Dorsolateral prefrontal cortex (tissue), 120 donors: ENCODE measurements at regions of chr1 and their contacts with region 1.

Region 1: GRCh38 chr1:83998498-83999315 is at the start of gene TTLL7:
- DNase-seq: peak; percentile 83 to 95 (median 90)
- H3K4me3 ChIP-seq: peak within 1 kb of the TSS; percentile 40 to 98 (median 90)
- H3K27ac ChIP-seq: peak within 1 kb of the TSS; percentile 81 to 100 (median 98)
- H3K27me3 ChIP-seq: peaks cover 0 to 3% (median 0%) of the 10 kb centered on the region in 45 donors
- CTCF ChIP-seq: peak in 10 of 56 donors; percentile 2 to 33 (median 15)
- total RNA-seq, gene TTLL7: 130 to 401 (median 226) TPM

Region 2: GRCh38 chr1:83959824-83960498 is 38.7 kb before region 1 on chr1:
- intact Hi-C with region 1: loop called (anchors 2 kb)
- DNase-seq: no peak
- H3K4me3 ChIP-seq: peak overlapping the region in 7 of 59 donors; percentile 5 to 44 (median 20)
- H3K27ac ChIP-seq: peak overlapping the region; percentile 2 to 97 (median 89)
- H3K27me3 ChIP-seq: no peaks in the 10 kb centered on the region
- CTCF ChIP-seq: peak in 1 of 56 donors; percentile 7

Region 3: DNA sequence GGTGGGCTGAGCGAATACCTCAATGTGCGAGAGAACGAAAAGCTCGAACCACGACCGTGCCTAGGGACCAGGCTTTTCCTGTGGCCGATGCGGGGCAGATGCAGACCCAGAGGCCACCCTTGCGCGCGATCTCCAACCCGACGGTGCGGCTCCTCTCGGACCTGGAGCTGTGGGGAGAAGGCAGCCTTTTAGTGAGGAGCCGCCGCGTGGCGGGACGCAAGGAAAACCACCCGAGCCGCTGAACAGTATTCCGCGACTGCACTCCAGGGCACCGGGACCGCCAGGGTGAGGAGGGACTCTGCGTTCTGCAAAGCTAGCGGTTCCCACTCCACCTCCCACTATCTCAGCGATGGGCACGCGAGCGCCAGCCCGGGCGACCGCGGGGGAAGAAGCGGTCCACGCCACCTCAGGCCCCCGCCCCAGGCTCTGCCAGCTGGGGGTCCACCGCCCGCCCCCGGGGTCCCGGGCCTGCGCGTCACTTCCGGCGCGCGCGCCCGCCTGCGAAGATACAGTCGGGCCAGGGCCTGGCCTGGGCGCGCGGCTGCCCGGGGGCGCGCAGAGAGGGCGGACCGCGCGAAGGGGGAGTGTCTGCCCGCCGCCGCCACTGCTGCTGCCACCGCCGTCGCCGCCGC is 78.9 kb after region 1 on chr1:
- intact Hi-C with region 1: loop called (anchors 2 kb)
- DNase-seq: peak; percentile 71 to 90 (median 78)
- H3K4me3 ChIP-seq: peak overlapping the region; percentile 70 to 96 (median 88)
- H3K27ac ChIP-seq: peak overlapping the region; percentile 68 to 99 (median 95)
- H3K27me3 ChIP-seq: no peaks in the 10 kb centered on the region
- CTCF ChIP-seq: peak in 30 of 56 donors; percentile 6 to 50 (median 28)

Region 4: GRCh38 chr1:84117868-84118267 is 119.2 kb after region 1 on chr1:
- intact Hi-C with region 1: loop called (anchors 5 to 10 kb)
- DNase-seq: no peak
- H3K4me3 ChIP-seq: no peak overlapping the region
- H3K27ac ChIP-seq: no peak overlapping the region
- H3K27me3 ChIP-seq: no peaks in the 10 kb centered on the region
- CTCF ChIP-seq: no peak

Region 5: DNA sequence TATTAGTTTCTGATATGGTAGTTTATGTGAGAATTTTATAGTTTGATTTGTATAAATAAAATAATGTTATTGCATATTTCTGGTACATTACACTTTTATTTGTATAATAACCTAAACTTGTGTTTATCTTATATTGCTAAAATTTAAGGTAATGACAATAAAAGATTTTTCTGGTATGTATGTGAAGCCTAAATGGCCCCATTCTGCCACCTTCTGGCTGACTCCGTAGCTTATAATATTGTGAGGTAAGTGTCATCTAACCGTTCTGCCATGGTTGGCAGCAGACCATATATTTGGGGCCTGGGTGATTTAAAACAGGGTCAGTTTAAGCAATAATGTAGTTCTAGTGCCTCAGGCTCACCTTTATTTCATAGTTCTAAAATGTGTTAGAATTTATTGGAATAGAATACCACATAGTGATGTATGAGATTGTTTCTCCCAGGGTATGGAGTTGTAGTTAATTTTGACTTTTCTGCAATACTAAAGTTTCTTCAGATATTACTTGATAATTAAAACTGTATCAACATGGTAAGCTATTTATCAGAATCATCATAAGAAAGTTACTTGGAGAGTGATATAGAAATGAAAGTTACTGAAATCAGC is 124.2 kb after region 1 on chr1:
- intact Hi-C with region 1: loop called (anchors 5 to 10 kb)
- DNase-seq: peak in 9 of 10 donors; percentile 27 to 85 (median 53)
- H3K4me3 ChIP-seq: no peak overlapping the region
- H3K27ac ChIP-seq: peak overlapping the region in 15 of 59 donors; percentile 0 to 70 (median 31)
- H3K27me3 ChIP-seq: no peaks in the 10 kb centered on the region
- CTCF ChIP-seq: peak; percentile 18 to 96 (median 76)